HepG2 (cell line): ENCODE measurements at regions of chr16 and their contacts with region 1.

Region 1: DNA sequence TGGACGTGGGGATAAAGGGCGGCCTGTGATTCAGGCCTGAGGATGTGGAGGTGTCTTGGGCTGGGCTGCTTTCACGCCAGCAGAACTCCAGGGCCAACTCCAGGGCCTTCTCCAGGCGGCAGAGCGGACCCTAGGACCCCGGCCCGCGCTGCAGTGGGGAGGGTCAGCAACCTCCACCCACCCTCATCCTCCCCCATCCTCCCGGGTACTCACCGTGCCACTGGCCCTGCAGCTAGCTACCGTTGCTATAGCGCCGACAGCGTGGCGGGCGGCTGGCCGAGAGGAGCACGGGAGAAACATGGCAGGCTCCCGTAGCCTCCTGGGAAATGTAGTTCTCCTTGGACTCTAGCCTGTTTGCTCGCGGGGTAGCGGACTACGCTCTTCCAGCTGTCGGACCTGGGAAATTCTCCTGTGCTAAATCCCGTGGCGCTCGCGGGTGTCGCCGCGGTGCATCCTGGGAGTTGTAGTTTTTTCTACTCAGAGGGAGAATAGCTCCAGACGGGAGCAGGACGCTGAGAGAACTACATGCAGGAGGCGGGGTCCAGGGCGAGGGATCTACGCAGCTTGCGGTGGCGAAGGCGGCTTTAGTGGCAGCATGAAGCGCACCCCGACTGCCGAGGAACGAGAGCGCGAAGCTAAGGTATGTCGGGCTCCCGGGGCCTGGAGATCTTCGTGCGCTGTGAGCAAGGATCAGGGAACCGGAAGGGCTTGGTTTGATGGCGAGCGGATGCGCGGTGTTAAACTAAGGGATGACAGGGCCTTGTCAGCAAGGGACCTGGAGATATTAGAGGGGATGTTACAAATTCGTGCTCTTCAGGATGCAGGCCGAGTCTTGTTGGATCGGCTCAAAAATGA is at the starts of genes FTO and RPGRIP1L:
- DNase-seq: peak; percentile 99
- ATAC-seq: peak; percentile 99
- H3K4me3 ChIP-seq: peak within 1 kb of the TSS; percentile 89 to 91 (median 90)
- H3K27ac ChIP-seq: peak within 1 kb of the TSS; percentile 58
- H3K4me1 ChIP-seq: peaks cover 19% of the 10 kb centered on the region
- H3K27me3 ChIP-seq: no peaks in the 10 kb centered on the region; a peak in 1 of 5 replicates
- CTCF ChIP-seq: peak; percentile 61
- EP300 ChIP-seq: peak in 1 of 2 experiments; percentile 48; a peak in 1 of 4 replicates
- POLR2A ChIP-seq: peak; percentile 32 to 60; a peak in 2 of 4 replicates
- RAD21 ChIP-seq: peak; percentile 23
- total RNA-seq, gene FTO: 55.8 and 92.5 TPM in 2 replicates
- total RNA-seq, gene RPGRIP1L: 13.5 and 17.8 TPM in 2 replicates

Region 2: GRCh38 chr16:53509906-53510703 is 193.7 kb before region 1 on chr16:
- CTCF ChIA-PET with region 1: no interaction called
- POLR2A ChIA-PET with region 1: interaction called, 3 read pairs
- in situ Hi-C with region 1: no loop called
- intact Hi-C with region 1: loop called (anchors 5 kb)
- DNase-seq: peak; percentile 67
- ATAC-seq: peak; percentile 70
- H3K4me3 ChIP-seq: peak overlapping the region; percentile 42 to 70 (median 50)
- H3K27ac ChIP-seq: peak overlapping the region; percentile 36
- H3K4me1 ChIP-seq: peaks cover 50% of the 10 kb centered on the region
- H3K27me3 ChIP-seq: no peaks in the 10 kb centered on the region
- CTCF ChIP-seq: peak; percentile 88
- EP300 ChIP-seq: peak in 1 of 2 experiments; percentile 31; a peak in 1 of 4 replicates
- POLR2A ChIP-seq: peak in 1 of 2 experiments; percentile 30; a peak in 1 of 4 replicates
- RAD21 ChIP-seq: peak; percentile 70

Region 3: DNA sequence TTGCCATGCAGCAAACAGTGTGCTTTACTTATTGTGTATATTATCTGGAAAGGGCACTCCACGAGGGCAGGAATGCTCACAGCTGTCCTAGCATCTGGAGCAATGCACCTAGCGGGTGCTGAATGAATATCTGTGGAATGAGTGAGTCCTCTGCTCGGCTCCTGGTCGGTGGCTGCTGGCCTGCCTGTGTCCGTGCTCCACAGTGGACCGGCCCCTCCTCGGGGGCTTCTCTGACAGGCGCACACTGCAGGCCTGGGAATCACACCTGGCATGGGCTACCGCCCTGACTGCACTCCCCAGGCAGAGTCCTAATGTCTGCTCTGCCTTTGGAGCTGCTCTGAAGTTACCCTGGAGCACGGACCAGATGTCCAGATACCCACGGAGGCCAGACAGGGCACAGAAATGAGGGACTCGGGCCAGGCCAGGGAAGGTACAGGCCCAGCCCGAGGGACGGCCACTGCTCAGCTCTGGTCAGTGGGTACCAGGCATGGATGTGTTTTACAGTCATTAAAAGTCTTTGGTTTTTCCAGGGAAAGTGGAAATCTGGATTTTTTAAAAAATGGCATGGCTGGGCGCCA is 179.8 kb before region 1 on chr16:
- CTCF ChIA-PET with region 1: no interaction called
- POLR2A ChIA-PET with region 1: no interaction called
- in situ Hi-C with region 1: no loop called
- intact Hi-C with region 1: no loop called
- DNase-seq: no peak
- ATAC-seq: peak; percentile 6; the same call in 2 of the 3 replicates
- H3K4me3 ChIP-seq: no peak overlapping the region
- H3K27ac ChIP-seq: no peak overlapping the region
- H3K4me1 ChIP-seq: peaks cover 40% of the 10 kb centered on the region
- H3K27me3 ChIP-seq: no peaks in the 10 kb centered on the region; a peak in 2 of 5 replicates
- CTCF ChIP-seq: no peak
- EP300 ChIP-seq: no peak
- POLR2A ChIP-seq: no peak
- RAD21 ChIP-seq: no peak

Region 4: GRCh38 chr16:53737552-53737951 is 33.7 kb after region 1 on chr16:
- CTCF ChIA-PET with region 1: no interaction called
- POLR2A ChIA-PET with region 1: no interaction called
- in situ Hi-C with region 1: no loop called
- intact Hi-C with region 1: no loop called
- DNase-seq: no peak
- ATAC-seq: no peak
- H3K4me3 ChIP-seq: no peak overlapping the region
- H3K27ac ChIP-seq: no peak overlapping the region
- H3K4me1 ChIP-seq: peaks cover 27% of the 10 kb centered on the region
- H3K27me3 ChIP-seq: no peaks in the 10 kb centered on the region
- CTCF ChIP-seq: no peak
- EP300 ChIP-seq: no peak
- POLR2A ChIP-seq: no peak
- RAD21 ChIP-seq: no peak

Region 5: GRCh38 chr16:53755536-53755910 is 51.7 kb after region 1 on chr16:
- CTCF ChIA-PET with region 1: no interaction called
- POLR2A ChIA-PET with region 1: interaction called, 3 read pairs
- in situ Hi-C with region 1: no loop called
- intact Hi-C with region 1: loop called (anchors 5 kb)
- DNase-seq: no peak
- ATAC-seq: no peak
- H3K4me3 ChIP-seq: no peak overlapping the region
- H3K27ac ChIP-seq: peak overlapping the region; percentile 61
- H3K4me1 ChIP-seq: peaks cover 63% of the 10 kb centered on the region
- H3K27me3 ChIP-seq: no peaks in the 10 kb centered on the region
- CTCF ChIP-seq: no peak
- EP300 ChIP-seq: no peak
- POLR2A ChIP-seq: no peak
- RAD21 ChIP-seq: no peak